ENCODE measurements at regions of chr3 and their contacts with region 1.

Region 1: DNA sequence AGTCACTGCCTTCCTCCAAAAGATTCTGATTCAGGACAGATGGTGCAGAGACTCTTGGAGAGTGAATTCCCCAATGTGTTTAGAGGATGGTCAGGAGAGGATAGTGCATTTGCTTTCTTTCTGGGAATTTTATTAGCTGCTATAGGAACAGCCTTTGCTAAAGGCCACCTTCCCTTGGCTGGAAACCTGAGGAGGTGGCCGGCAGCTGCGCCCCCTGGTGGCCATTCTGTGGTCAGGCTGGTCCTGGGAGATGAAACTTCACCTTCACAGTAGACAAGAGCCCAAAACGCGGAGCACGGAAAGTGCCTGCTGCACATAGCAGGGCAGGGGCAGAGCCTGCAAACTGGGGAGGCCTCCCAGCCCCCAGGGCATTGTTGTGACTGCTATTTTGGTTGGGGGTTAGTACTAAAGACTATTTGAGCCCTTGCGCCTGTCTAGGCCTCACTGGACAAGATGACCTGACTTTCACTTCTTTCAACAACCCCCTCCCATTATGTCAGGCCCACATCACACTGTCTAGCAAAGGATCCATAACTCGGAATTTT is 34.3 kb downstream of the SEC22C start:
- DNase-seq: peak; percentile 55
- ATAC-seq: peak; percentile 62
- H3K4me3 Mint-ChIP-seq: no peak overlapping the region
- H3K27ac Mint-ChIP-seq: no peak overlapping the region
- H3K4me1 Mint-ChIP-seq: no peaks in the 10 kb centered on the region
- H3K27me3 Mint-ChIP-seq: no peaks in the 10 kb centered on the region
- CTCF ChIP-seq: peak; percentile 87

Region 2: DNA sequence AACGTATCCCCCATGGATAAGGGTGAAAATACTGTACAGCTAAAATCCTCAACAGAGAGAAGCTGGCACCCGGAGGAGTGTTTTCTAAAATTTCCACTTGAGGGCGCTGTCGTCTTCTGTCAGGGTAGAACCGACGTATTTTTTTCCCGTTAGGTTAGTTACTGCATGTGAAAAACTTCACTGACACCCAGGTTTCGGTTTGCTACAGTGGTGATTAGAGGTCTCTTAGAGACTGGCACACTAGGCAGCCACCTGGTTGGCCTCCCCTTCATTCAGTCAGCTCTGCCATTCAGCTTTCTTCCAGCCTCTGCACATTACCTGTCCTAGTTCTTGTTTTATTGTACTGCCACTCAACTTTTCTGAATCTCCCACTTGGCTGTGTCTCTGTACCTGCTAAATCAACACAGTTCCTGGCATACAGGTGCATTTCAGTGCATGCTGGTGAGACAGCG is 299.9 kb before region 1 on chr3:
- CTCF ChIA-PET with region 1: interaction called, 11 read pairs
- POLR2A ChIA-PET with region 1: no interaction called
- intact Hi-C with region 1: no loop called
- DNase-seq: no peak
- ATAC-seq: peak; percentile 49
- H3K4me3 Mint-ChIP-seq: no peak overlapping the region
- H3K27ac Mint-ChIP-seq: no peak overlapping the region
- H3K4me1 Mint-ChIP-seq: peaks cover 2% of the 10 kb centered on the region
- H3K27me3 Mint-ChIP-seq: peaks cover 16% of the 10 kb centered on the region
- CTCF ChIP-seq: no peak

Region 3: GRCh38 chr3:42557849-42558248 is 10.4 kb after region 1 on chr3:
- CTCF ChIA-PET with region 1: no interaction called
- POLR2A ChIA-PET with region 1: no interaction called
- intact Hi-C with region 1: no loop called
- DNase-seq: no peak
- ATAC-seq: no peak
- H3K4me3 Mint-ChIP-seq: no peak overlapping the region
- H3K27ac Mint-ChIP-seq: no peak overlapping the region
- H3K4me1 Mint-ChIP-seq: no peaks in the 10 kb centered on the region
- H3K27me3 Mint-ChIP-seq: no peaks in the 10 kb centered on the region
- CTCF ChIP-seq: no peak

Region 4: GRCh38 chr3:42581709-42582473 is 34.4 kb after region 1 on chr3 and contains the start of gene SEC22C:
- CTCF ChIA-PET with region 1: no interaction called
- POLR2A ChIA-PET with region 1: no interaction called
- intact Hi-C with region 1: no loop called
- DNase-seq: peak; percentile 92
- ATAC-seq: peak; percentile 92
- H3K4me3 Mint-ChIP-seq: peak within 1 kb of the TSS; percentile 94
- H3K27ac Mint-ChIP-seq: peak within 1 kb of the TSS; percentile 97
- H3K4me1 Mint-ChIP-seq: peaks cover 29% of the 10 kb centered on the region
- H3K27me3 Mint-ChIP-seq: no peaks in the 10 kb centered on the region
- CTCF ChIP-seq: no peak
- total RNA-seq, gene SEC22C: 36.4 and 38.3 TPM in 2 replicates

Measured in activated B cell treated with CpG ODN at 0.5 μM for 24 hours (primary cell).